CD8-positive, alpha-beta memory T cell (primary cell): ENCODE measurements at regions of chr3 and their contacts with region 1.

Region 1: GRCh38 chr3:152243721-152244516 is 24.8 kb upstream of the MBNL1 start:
- DNase-seq: peak in 3 of 5 donors; percentile 28 to 52 (median 49)
- H3K4me3 ChIP-seq: peak overlapping the region; percentile 57
- H3K4me3 Mint-ChIP-seq: peak overlapping the region; percentile 89 to 95 (median 92)
- H3K27ac ChIP-seq: peak overlapping the region; percentile 86
- H3K27ac Mint-ChIP-seq: peak overlapping the region; percentile 68 to 97 (median 92)
- H3K4me1 ChIP-seq: peaks cover 51% of the 10 kb centered on the region
- H3K4me1 Mint-ChIP-seq: peaks cover 50 to 64% (median 61%) of the 10 kb centered on the region in 3 donors
- H3K27me3 ChIP-seq: no peaks in the 10 kb centered on the region
- H3K27me3 Mint-ChIP-seq: no peaks in the 10 kb centered on the region

Region 2: GRCh38 chr3:151795276-151795675 is 448.6 kb before region 1 on chr3:
- CTCF ChIA-PET with region 1: no interaction called
- POLR2A ChIA-PET with region 1: no interaction called
- DNase-seq: no peak
- H3K4me3 ChIP-seq: no peak overlapping the region
- H3K4me3 Mint-ChIP-seq: no peak overlapping the region
- H3K27ac ChIP-seq: no peak overlapping the region
- H3K27ac Mint-ChIP-seq: no peak overlapping the region
- H3K4me1 ChIP-seq: no peaks in the 10 kb centered on the region
- H3K4me1 Mint-ChIP-seq: no peaks in the 10 kb centered on the region
- H3K27me3 ChIP-seq: no peaks in the 10 kb centered on the region
- H3K27me3 Mint-ChIP-seq: peaks cover 0 to 10% of the 10 kb centered on the region in 2 donors

Region 3: GRCh38 chr3:152113413-152113812 is 130.5 kb before region 1 on chr3:
- CTCF ChIA-PET with region 1: no interaction called
- POLR2A ChIA-PET with region 1: no interaction called
- DNase-seq: no peak
- H3K4me3 ChIP-seq: no peak overlapping the region
- H3K4me3 Mint-ChIP-seq: no peak overlapping the region
- H3K27ac ChIP-seq: no peak overlapping the region
- H3K27ac Mint-ChIP-seq: no peak overlapping the region
- H3K4me1 ChIP-seq: no peaks in the 10 kb centered on the region
- H3K4me1 Mint-ChIP-seq: no peaks in the 10 kb centered on the region
- H3K27me3 ChIP-seq: no peaks in the 10 kb centered on the region
- H3K27me3 Mint-ChIP-seq: peaks cover 0 to 3% of the 10 kb centered on the region in 2 donors

Region 4: GRCh38 chr3:152193673-152194267 is 50.1 kb before region 1 on chr3:
- CTCF ChIA-PET with region 1: interaction called, 11 read pairs
- POLR2A ChIA-PET with region 1: interaction called, 7 read pairs
- DNase-seq: peak in 3 of 5 donors; percentile 11 to 61 (median 48)
- H3K4me3 ChIP-seq: peak overlapping the region; percentile 81
- H3K4me3 Mint-ChIP-seq: peak overlapping the region; percentile 87 to 95 (median 89)
- H3K27ac ChIP-seq: peak overlapping the region; percentile 83
- H3K27ac Mint-ChIP-seq: peak overlapping the region; percentile 87 to 99 (median 94)
- H3K4me1 ChIP-seq: peaks cover 66% of the 10 kb centered on the region
- H3K4me1 Mint-ChIP-seq: peaks cover 68 to 89% (median 89%) of the 10 kb centered on the region in 3 donors
- H3K27me3 ChIP-seq: no peaks in the 10 kb centered on the region
- H3K27me3 Mint-ChIP-seq: no peaks in the 10 kb centered on the region

Region 5: DNA sequence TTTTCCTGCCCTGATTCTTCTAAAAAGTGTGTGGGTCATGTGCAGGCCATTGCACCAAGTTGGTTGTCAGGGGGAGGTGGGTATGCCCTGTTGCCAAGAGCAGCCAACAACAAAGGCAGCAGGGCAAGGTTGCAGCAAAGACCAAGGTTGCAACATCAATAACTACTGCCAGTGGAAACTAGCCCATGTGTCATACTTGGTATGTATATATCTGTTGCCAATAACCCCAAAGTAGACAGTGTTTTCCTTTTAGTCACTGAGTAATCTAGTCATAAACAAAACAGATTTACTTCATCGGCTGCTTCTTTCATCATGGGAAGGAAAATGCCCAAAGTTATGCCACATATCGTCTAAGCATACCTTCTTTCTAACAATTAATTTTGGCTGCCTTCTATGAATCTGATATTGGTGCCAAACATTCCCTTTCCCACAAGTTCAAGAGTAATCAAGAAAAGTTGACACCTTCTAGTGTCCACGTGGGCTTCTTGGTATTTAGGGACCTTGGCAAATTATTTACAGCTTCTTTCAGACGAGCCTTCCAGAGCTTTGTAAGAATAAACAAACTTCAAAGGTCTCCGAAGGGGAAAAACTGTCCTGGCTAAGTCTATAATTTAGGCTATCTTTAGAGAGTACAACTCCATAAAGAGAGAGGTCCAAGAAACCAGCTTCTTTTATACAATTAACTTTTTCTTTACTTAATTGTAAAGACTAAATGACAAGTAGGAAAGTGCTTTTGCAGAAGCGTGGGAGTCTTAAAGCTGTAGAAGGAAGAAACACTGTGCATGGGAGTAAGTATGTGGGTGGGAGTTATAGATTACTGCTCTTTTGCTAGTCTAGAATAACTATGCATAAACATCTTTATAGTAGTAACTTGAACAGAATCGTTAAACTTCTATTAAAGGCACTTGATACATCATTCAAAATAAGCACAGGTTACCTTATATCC is 14.8 kb after region 1 on chr3:
- CTCF ChIA-PET with region 1: interaction called, 9 read pairs
- POLR2A ChIA-PET with region 1: interaction called, 59 read pairs
- DNase-seq: peak; percentile 47 to 88 (median 60)
- H3K4me3 ChIP-seq: peak overlapping the region; percentile 27
- H3K4me3 Mint-ChIP-seq: peak overlapping the region; percentile 65 to 81 (median 79)
- H3K27ac ChIP-seq: peak overlapping the region; percentile 52
- H3K27ac Mint-ChIP-seq: peak overlapping the region; percentile 93 to 98 (median 96)
- H3K4me1 ChIP-seq: peaks cover 90% of the 10 kb centered on the region
- H3K4me1 Mint-ChIP-seq: peaks cover 88 to 96% (median 93%) of the 10 kb centered on the region in 3 donors
- H3K27me3 ChIP-seq: no peaks in the 10 kb centered on the region
- H3K27me3 Mint-ChIP-seq: no peaks in the 10 kb centered on the region